ENCODE measurements at regions of chr12 and their contacts with region 1.

Region 1: GRCh38 chr12:106386813-106387535 is 29.4 kb downstream of the POLR3B start:
- DNase-seq: no peak
- ATAC-seq: no peak
- H3K4me3 ChIP-seq: no peak overlapping the region
- H3K27ac ChIP-seq: no peak overlapping the region
- H3K4me1 ChIP-seq: no peaks in the 10 kb centered on the region
- H3K27me3 ChIP-seq: no peaks in the 10 kb centered on the region
- CTCF ChIP-seq: no peak
- EP300 ChIP-seq: no peak
- POLR2A ChIP-seq: no peak
- RAD21 ChIP-seq: no peak

Region 2: DNA sequence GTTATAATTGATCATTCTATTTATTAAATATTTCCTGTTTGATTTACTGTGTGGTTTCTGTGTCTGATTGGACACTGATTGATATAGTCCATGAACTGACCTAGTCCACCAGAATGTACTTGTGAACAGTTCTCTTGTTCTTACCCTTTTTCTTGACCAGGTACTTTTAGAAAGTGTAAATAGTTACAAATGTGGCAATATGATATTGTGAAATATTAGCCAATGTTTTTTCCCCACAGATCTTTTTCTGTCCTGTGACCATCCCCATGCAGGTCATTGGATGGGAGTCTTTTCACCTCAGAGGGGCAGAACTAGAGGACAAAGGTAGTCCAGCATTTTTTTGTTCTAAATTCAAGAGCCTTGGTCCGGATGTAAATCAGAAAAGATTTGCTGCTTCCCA is 714.7 kb after region 1 on chr12:
- CTCF ChIA-PET with region 1: interaction called, 4 read pairs
- POLR2A ChIA-PET with region 1: no interaction called
- RAD21 ChIA-PET with region 1: interaction called, 3 read pairs
- SMC1A ChIA-PET with region 1: no interaction called
- in situ Hi-C with region 1: loop called (anchors 10 kb)
- intact Hi-C with region 1: loop called (anchors 5 kb)
- DNase-seq: no peak
- ATAC-seq: no peak
- H3K4me3 ChIP-seq: no peak overlapping the region
- H3K27ac ChIP-seq: no peak overlapping the region
- H3K4me1 ChIP-seq: no peaks in the 10 kb centered on the region
- H3K27me3 ChIP-seq: no peaks in the 10 kb centered on the region; a peak in 1 of 4 replicates
- CTCF ChIP-seq: no peak
- EP300 ChIP-seq: no peak
- POLR2A ChIP-seq: no peak
- RAD21 ChIP-seq: no peak